ENCODE measurements at regions of chr10 and their contacts with region 1.

Region 1: GRCh38 chr10:91088300-91089140 is 131.9 kb upstream of the PCGF5 start:
- DNase-seq: peak; percentile 29
- ATAC-seq: peak; percentile 38
- H3K4me3 ChIP-seq: no peak overlapping the region
- H3K27ac ChIP-seq: no peak overlapping the region
- H3K4me1 ChIP-seq: no peaks in the 10 kb centered on the region
- H3K27me3 ChIP-seq: no peaks in the 10 kb centered on the region; the same call in 1 of the 2 replicates
- CTCF ChIP-seq: peak; percentile 37; the same call in 1 of the 2 replicates

Region 2: DNA sequence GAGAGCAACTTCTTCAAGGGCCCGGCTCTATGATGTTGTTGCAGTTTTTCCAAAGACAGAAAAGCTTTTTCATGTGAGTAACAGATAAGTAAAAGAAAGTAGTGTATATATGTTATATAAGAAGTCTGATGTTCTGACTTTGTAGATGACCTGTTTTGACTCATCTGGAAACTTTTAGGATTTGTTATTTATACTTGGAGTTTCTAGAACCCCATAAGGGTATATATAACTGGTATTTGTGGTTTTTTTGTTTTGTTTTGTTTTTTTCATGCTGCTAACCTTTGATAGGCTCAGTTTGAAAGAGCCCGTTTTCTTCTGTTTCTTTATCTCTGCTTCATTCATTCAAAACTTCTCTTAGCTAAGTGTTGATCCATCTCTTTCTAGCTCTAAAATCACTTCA is 209.5 kb before region 1 on chr10:
- CTCF ChIA-PET with region 1: interaction called, 14 read pairs
- POLR2A ChIA-PET with region 1: no interaction called
- intact Hi-C with region 1: loop called (anchors 5 kb)
- DNase-seq: no peak
- ATAC-seq: no peak
- H3K4me3 ChIP-seq: no peak overlapping the region
- H3K27ac ChIP-seq: no peak overlapping the region
- H3K4me1 ChIP-seq: peaks cover 3% of the 10 kb centered on the region
- H3K27me3 ChIP-seq: no peaks in the 10 kb centered on the region
- CTCF ChIP-seq: no peak

Region 3: DNA sequence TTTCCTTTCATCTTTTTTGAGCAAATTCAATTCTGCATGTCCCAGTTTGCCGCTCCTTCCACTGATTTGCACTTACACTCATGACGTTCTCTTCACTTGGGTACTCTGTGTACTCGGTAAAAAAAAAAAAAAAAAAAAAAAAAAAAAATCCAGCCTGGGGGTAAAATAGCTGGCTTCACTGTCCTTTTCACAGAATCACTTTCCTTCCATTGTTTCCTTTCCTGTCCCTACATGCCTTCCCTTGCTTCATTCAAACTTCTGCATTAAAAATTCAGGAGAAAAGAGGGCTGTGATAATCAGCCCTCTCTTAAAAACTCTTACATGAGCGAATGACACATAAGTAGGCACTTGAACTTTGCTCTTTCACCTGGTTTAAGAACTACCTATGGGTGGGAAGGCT is 176.3 kb before region 1 on chr10:
- CTCF ChIA-PET with region 1: no interaction called
- POLR2A ChIA-PET with region 1: no interaction called
- intact Hi-C with region 1: loop called (anchors 10 kb)
- DNase-seq: no peak
- ATAC-seq: no peak
- H3K4me3 ChIP-seq: no peak overlapping the region
- H3K27ac ChIP-seq: no peak overlapping the region
- H3K4me1 ChIP-seq: peaks cover 6% of the 10 kb centered on the region
- H3K27me3 ChIP-seq: no peaks in the 10 kb centered on the region
- CTCF ChIP-seq: no peak

Region 4: DNA sequence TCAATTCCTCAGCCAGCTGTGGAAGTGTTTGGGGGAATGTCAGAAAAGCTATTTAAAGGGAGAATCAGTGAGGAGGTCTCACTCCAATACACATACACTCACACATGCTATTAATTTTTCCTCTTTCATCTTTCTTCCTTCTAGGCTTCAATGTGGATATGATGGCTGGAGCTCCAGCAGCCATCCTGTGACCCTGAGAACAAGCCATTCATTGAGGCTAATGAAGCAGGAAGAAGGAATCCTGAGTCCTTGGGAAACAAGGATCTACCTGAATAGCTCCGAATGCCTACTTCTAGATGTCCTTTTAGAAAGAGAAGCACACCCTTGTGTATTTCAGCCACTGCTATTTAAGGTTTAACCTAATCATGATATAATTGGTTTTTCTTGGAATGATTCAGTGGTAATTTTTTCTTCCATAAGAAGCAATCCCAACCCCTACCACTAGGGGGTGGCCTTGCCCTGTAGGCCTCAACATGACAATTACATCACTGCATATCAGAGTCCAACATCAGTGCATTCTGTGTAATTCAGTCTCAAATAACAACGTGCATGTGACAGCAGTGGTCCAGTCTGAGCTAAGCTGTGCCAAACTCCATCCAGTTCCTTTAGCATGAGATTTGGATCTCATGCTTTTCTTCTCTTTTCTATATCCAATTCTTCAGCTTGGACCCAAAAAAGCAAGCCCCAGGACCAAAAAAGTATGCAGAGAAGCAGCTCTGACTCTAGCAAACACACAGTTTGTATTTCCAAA is 82.3 kb before region 1 on chr10:
- CTCF ChIA-PET with region 1: no interaction called
- POLR2A ChIA-PET with region 1: no interaction called
- intact Hi-C with region 1: loop called (anchors 2 kb)
- DNase-seq: peak; percentile 69
- ATAC-seq: peak; percentile 53
- H3K4me3 ChIP-seq: no peak overlapping the region
- H3K27ac ChIP-seq: no peak overlapping the region
- H3K4me1 ChIP-seq: peaks cover 16% of the 10 kb centered on the region
- H3K27me3 ChIP-seq: no peaks in the 10 kb centered on the region
- CTCF ChIP-seq: peak; percentile 89

Region 5: GRCh38 chr10:91251430-91252056 is 163.0 kb after region 1 on chr10:
- CTCF ChIA-PET with region 1: interaction called, 10 read pairs
- POLR2A ChIA-PET with region 1: no interaction called
- intact Hi-C with region 1: loop called (anchors 1 kb)
- DNase-seq: peak; percentile 65
- ATAC-seq: no peak
- H3K4me3 ChIP-seq: no peak overlapping the region
- H3K27ac ChIP-seq: no peak overlapping the region
- H3K4me1 ChIP-seq: no peaks in the 10 kb centered on the region
- H3K27me3 ChIP-seq: no peaks in the 10 kb centered on the region
- CTCF ChIP-seq: peak; percentile 83

Region 6: GRCh38 chr10:91298224-91298871 is 209.8 kb after region 1 on chr10:
- CTCF ChIA-PET with region 1: interaction called, 10 read pairs
- POLR2A ChIA-PET with region 1: no interaction called
- intact Hi-C with region 1: no loop called
- DNase-seq: peak; percentile 74
- ATAC-seq: peak; percentile 80
- H3K4me3 ChIP-seq: peak overlapping the region; percentile 44
- H3K27ac ChIP-seq: no peak overlapping the region
- H3K4me1 ChIP-seq: peaks cover 16% of the 10 kb centered on the region
- H3K27me3 ChIP-seq: no peaks in the 10 kb centered on the region
- CTCF ChIP-seq: peak; percentile 79